HepG2 (cell line): ENCODE measurements at regions of chr17 and their contacts with region 1.

Region 1: DNA sequence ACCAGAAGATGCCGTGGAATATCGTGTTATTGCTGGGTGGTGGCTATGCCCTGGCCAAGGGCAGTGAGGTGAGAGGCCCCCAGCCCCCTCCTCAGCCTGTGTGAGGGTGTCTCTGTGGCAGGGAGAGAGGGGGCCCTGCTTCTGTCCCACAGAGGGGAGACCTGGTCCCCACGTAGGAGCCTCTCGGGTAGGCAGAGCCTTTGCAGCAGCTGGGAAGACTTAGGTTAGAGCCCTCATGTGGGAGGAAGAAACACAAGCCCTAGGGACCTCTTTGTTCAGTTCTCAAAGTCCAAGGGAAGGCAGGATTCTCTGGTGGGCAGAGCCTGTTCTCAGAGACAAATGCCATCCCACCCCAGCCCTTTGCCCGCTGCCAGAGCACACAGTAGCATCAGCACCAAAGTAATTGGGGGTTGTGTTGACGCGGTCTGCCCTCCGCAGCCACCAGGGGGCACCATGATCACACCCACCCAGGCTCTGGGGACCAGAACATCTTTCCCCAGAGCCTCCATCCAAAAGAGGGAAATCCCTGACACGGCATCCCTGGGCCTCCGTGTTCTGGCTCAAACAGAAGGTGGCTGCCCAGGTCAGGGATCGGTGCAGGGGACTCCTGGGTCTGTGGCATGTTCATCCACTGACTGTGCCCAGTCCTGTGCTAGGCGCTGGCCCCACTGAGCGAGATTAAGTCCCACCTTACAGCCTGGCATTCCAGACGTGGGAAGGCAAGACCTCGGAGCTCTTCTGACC is 11.5 kb upstream of the FOXN1 start:
- DNase-seq: peak; percentile 27
- ATAC-seq: peak; percentile 79
- H3K4me3 ChIP-seq: no peak overlapping the region
- H3K27ac ChIP-seq: no peak overlapping the region
- H3K4me1 ChIP-seq: peaks cover 15% of the 10 kb centered on the region
- H3K27me3 ChIP-seq: peaks cover 1 to 6% of the 10 kb centered on the region in 2 experiments; a peak in 1 of 5 replicates
- CTCF ChIP-seq: peak; percentile 94
- EP300 ChIP-seq: no peak
- POLR2A ChIP-seq: no peak
- RAD21 ChIP-seq: peak; percentile 88

Region 2: GRCh38 chr17:28532991-28533807 is 38.6 kb after region 1 on chr17:
- CTCF ChIA-PET with region 1: interaction called, 3 read pairs
- POLR2A ChIA-PET with region 1: no interaction called
- in situ Hi-C with region 1: loop called (anchors 5 kb)
- intact Hi-C with region 1: no loop called
- DNase-seq: no peak
- ATAC-seq: no peak
- H3K4me3 ChIP-seq: no peak overlapping the region
- H3K27ac ChIP-seq: no peak overlapping the region
- H3K4me1 ChIP-seq: peaks cover 6% of the 10 kb centered on the region
- H3K27me3 ChIP-seq: peaks cover 10 to 43% of the 10 kb centered on the region in 2 experiments; a peak in 4 of 5 replicates
- CTCF ChIP-seq: no peak
- EP300 ChIP-seq: no peak
- POLR2A ChIP-seq: no peak
- RAD21 ChIP-seq: no peak

Region 3: GRCh38 chr17:28540231-28540630 is 45.6 kb after region 1 on chr17:
- CTCF ChIA-PET with region 1: interaction called, 45 read pairs
- POLR2A ChIA-PET with region 1: no interaction called
- in situ Hi-C with region 1: no loop called
- intact Hi-C with region 1: loop called (anchors 1 kb)
- DNase-seq: no peak
- ATAC-seq: no peak
- H3K4me3 ChIP-seq: no peak overlapping the region
- H3K27ac ChIP-seq: no peak overlapping the region
- H3K4me1 ChIP-seq: peaks cover 6% of the 10 kb centered on the region
- H3K27me3 ChIP-seq: peaks cover 4 to 15% of the 10 kb centered on the region in 2 experiments; a peak in 4 of 5 replicates
- CTCF ChIP-seq: no peak
- EP300 ChIP-seq: no peak
- POLR2A ChIP-seq: no peak
- RAD21 ChIP-seq: no peak

Region 4: GRCh38 chr17:28612936-28613872 is 118.6 kb after region 1 on chr17:
- CTCF ChIA-PET with region 1: interaction called, 5 read pairs
- POLR2A ChIA-PET with region 1: no interaction called
- in situ Hi-C with region 1: loop called (anchors 5 kb)
- intact Hi-C with region 1: loop called (anchors 1 kb)
- DNase-seq: peak; percentile 52
- ATAC-seq: peak; percentile 81
- H3K4me3 ChIP-seq: no peak overlapping the region
- H3K27ac ChIP-seq: no peak overlapping the region
- H3K4me1 ChIP-seq: no peaks in the 10 kb centered on the region
- H3K27me3 ChIP-seq: no peaks in the 10 kb centered on the region
- CTCF ChIP-seq: peak; percentile 79
- EP300 ChIP-seq: no peak
- POLR2A ChIP-seq: no peak
- RAD21 ChIP-seq: peak; percentile 38; the same call in 1 of the 2 replicates

Region 5: GRCh38 chr17:28842282-28843012 is 347.8 kb after region 1 on chr17 and contains the start of gene FAM222B:
- CTCF ChIA-PET with region 1: no interaction called
- POLR2A ChIA-PET with region 1: no interaction called
- in situ Hi-C with region 1: no loop called
- intact Hi-C with region 1: no loop called
- DNase-seq: peak; percentile 79
- ATAC-seq: peak; percentile 98
- H3K4me3 ChIP-seq: peak within 1 kb of the TSS; percentile 73 to 92 (median 74)
- H3K27ac ChIP-seq: peak within 1 kb of the TSS; percentile 59
- H3K4me1 ChIP-seq: peaks cover 20% of the 10 kb centered on the region
- H3K27me3 ChIP-seq: no peaks in the 10 kb centered on the region; a peak in 1 of 5 replicates
- CTCF ChIP-seq: no peak
- EP300 ChIP-seq: no peak
- POLR2A ChIP-seq: peak; percentile 58 to 79
- RAD21 ChIP-seq: no peak
- total RNA-seq, gene FAM222B: 3.5 and 4.7 TPM in 2 replicates